OCI-LY7 (cell line): ENCODE measurements at regions of chr5 and their contacts with region 1.

Region 1: GRCh38 chr5:141878711-141879425 is 658 bp upstream of the PCDH1 start:
- DNase-seq: peak; percentile 89
- H3K4me3 ChIP-seq: no peak overlapping the region
- H3K27ac ChIP-seq: no peak overlapping the region
- H3K4me1 ChIP-seq: peaks cover 10% of the 10 kb centered on the region
- CTCF ChIP-seq: peak; percentile 97

Region 2: GRCh38 chr5:141664732-141665461 is 214.0 kb before region 1 on chr5:
- CTCF ChIA-PET with region 1: no interaction called
- POLR2A ChIA-PET with region 1: no interaction called
- intact Hi-C with region 1: loop called (anchors 1 kb)
- DNase-seq: peak; percentile 80
- H3K4me3 ChIP-seq: no peak overlapping the region
- H3K27ac ChIP-seq: no peak overlapping the region
- H3K4me1 ChIP-seq: no peaks in the 10 kb centered on the region
- CTCF ChIP-seq: peak; percentile 96

Region 3: DNA sequence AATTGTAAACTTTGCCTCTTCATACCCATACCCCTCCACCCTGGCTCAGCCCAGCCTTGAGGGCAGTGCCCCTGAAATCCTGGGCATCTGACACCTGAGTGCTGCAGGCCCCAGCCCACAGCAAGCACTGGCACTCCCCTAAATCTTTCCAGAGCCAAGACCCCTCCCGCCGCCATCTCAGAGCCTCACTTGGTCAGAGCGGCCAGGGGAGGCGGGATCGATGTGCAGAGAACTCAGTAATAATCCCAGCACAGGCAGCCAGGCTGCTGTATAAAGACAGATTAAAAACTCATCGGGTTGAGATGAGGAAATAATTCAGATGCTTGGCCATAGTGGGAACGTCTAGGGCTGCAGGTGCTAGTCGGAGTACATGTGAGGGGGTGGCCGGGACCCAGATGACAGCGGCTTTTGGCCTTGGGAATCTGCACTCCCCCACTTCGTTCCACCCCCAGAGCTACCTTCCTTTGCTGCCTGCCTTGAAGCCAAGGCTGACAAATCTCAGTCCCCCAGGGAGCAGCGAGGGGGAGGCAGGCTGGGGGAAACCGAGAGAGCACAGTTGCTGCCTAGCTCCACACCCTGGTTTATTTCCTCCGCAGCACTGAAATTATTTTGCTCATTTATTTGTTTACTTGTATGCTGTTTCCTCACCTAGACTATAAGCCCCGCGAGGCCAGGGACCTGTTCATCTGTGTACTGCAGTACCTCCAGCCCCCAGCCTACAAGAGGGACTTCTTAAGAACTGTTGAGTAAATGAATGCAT is 177.3 kb before region 1 on chr5:
- CTCF ChIA-PET with region 1: no interaction called
- POLR2A ChIA-PET with region 1: interaction called, 5 read pairs
- intact Hi-C with region 1: loop called (anchors 1 kb)
- DNase-seq: no peak
- H3K4me3 ChIP-seq: no peak overlapping the region
- H3K27ac ChIP-seq: no peak overlapping the region
- H3K4me1 ChIP-seq: no peaks in the 10 kb centered on the region
- CTCF ChIP-seq: no peak

Region 4: DNA sequence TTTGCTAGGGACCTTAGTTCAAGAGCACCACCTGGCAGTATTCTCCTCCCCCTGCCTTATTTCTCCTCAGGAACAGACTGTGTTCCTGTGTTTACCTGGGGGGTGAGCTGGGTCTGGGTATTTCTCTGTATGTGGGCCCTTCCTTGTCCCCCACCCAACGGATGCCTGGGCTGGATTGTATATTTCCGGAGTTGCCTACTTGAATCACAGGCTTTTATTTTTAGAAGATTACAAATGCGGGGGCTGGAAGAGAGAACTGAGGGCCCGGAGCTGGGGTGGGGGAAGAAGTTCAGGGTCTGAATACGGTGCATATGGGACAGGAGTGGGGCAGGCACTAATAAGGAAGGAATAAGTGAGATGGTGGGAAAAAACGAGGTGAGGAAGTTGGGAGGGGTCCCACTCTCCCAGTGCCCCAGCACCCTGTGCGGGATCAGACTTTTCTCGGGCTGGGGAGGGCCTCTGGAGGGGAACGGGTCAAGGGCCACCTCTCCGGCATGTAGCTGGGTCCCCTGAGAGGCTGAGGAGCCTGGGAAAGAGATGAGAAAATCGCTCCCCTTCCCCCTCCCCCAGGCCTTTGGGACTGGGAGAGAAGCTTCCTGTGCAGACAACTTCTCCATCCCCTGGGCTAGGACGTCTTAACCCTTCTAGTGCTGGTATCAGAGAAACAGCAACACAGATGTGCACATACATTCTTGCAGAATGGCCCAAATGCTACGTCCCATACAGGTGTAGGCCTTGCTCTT is 42.8 kb before region 1 on chr5:
- CTCF ChIA-PET with region 1: interaction called, 3 read pairs
- POLR2A ChIA-PET with region 1: interaction called, 3 read pairs
- intact Hi-C with region 1: loop called (anchors 5 kb)
- DNase-seq: no peak
- H3K4me3 ChIP-seq: peak overlapping the region; percentile 7
- H3K27ac ChIP-seq: no peak overlapping the region
- H3K4me1 ChIP-seq: peaks cover 54% of the 10 kb centered on the region
- CTCF ChIP-seq: no peak

Region 5: GRCh38 chr5:141960449-141961202 is 81.8 kb after region 1 on chr5:
- CTCF ChIA-PET with region 1: interaction called, 4 read pairs
- POLR2A ChIA-PET with region 1: no interaction called
- intact Hi-C with region 1: loop called (anchors 1 kb)
- DNase-seq: peak; percentile 94
- H3K4me3 ChIP-seq: peak overlapping the region; percentile 32
- H3K27ac ChIP-seq: peak overlapping the region; percentile 27
- H3K4me1 ChIP-seq: peaks cover 42% of the 10 kb centered on the region
- CTCF ChIP-seq: peak; percentile 92